CD4-positive, alpha-beta memory T cell (primary cell): ENCODE measurements at regions of chr6 and their contacts with region 1.

Region 1: DNA sequence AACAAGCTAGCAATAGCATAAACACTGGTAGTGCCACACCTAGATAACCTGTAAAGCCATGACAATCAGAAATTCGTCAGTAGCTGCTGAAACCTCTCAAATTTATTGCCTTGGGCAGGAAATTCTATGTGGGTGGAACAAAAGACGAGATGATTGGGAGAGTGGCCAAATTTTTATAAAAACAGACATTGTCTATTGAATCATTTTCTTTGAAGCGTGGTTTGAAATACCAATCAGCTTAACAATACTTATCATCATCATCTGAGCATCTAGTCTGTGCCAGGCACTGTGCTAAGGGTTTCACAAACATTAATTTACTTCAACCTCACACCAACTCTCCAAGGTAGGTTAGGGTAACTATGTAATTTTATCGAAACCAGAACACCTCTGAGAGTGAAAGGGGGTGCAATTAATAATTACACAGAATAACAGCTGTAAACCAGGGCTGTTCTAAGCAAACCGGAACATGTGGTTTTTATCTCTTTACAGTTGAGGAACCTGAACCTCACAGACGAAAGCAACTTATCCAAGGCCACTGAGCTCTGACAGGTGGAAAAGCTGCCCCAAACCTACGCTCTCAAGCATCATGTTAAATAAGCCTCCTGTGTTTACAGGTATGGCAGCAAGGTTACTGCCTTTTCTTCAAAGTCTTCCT is 43.4 kb downstream of the NHSL1 start:
- DNase-seq: peak; percentile 57 to 81 (median 74)
- H3K4me3 ChIP-seq: peak overlapping the region; percentile 12 to 47
- H3K4me3 Mint-ChIP-seq: peak overlapping the region; percentile 57 to 87 (median 72)
- H3K27ac ChIP-seq: peak overlapping the region; percentile 41
- H3K27ac Mint-ChIP-seq: peak overlapping the region; percentile 85 to 96 (median 89)
- H3K4me1 ChIP-seq: peaks cover 26% of the 10 kb centered on the region
- H3K4me1 Mint-ChIP-seq: peaks cover 13 to 37% (median 24%) of the 10 kb centered on the region in 4 donors
- H3K27me3 ChIP-seq: no peaks in the 10 kb centered on the region
- H3K27me3 Mint-ChIP-seq: no peaks in the 10 kb centered on the region

Region 2: GRCh38 chr6:138499303-138500018 is 43.6 kb after region 1 on chr6 and contains the start of gene NHSL1:
- CTCF ChIA-PET with region 1: no interaction called
- POLR2A ChIA-PET with region 1: no interaction called
- intact Hi-C with region 1: loop called (anchors 5 kb)
- DNase-seq: no peak
- H3K4me3 ChIP-seq: no peak within 1 kb of the TSS
- H3K4me3 Mint-ChIP-seq: no peak within 1 kb of the TSS
- H3K27ac ChIP-seq: no peak within 1 kb of the TSS
- H3K27ac Mint-ChIP-seq: no peak within 1 kb of the TSS
- H3K4me1 ChIP-seq: no peaks in the 10 kb centered on the region
- H3K4me1 Mint-ChIP-seq: peaks cover 0 to 3% (median under 1%) of the 10 kb centered on the region in 4 donors
- H3K27me3 ChIP-seq: no peaks in the 10 kb centered on the region
- H3K27me3 Mint-ChIP-seq: peaks cover 3 to 5% of the 10 kb centered on the region in 2 donors
- total RNA-seq, gene NHSL1: 0.53 to 0.58 TPM

Region 3: GRCh38 chr6:138647006-138647405 is 191.1 kb after region 1 on chr6:
- CTCF ChIA-PET with region 1: no interaction called
- POLR2A ChIA-PET with region 1: no interaction called
- intact Hi-C with region 1: no loop called
- DNase-seq: no peak
- H3K4me3 ChIP-seq: no peak overlapping the region
- H3K4me3 Mint-ChIP-seq: no peak overlapping the region
- H3K27ac ChIP-seq: no peak overlapping the region
- H3K27ac Mint-ChIP-seq: no peak overlapping the region
- H3K4me1 ChIP-seq: no peaks in the 10 kb centered on the region
- H3K4me1 Mint-ChIP-seq: no peaks in the 10 kb centered on the region
- H3K27me3 ChIP-seq: no peaks in the 10 kb centered on the region
- H3K27me3 Mint-ChIP-seq: peaks cover 0 to 1% of the 10 kb centered on the region in 2 donors

Region 4: DNA sequence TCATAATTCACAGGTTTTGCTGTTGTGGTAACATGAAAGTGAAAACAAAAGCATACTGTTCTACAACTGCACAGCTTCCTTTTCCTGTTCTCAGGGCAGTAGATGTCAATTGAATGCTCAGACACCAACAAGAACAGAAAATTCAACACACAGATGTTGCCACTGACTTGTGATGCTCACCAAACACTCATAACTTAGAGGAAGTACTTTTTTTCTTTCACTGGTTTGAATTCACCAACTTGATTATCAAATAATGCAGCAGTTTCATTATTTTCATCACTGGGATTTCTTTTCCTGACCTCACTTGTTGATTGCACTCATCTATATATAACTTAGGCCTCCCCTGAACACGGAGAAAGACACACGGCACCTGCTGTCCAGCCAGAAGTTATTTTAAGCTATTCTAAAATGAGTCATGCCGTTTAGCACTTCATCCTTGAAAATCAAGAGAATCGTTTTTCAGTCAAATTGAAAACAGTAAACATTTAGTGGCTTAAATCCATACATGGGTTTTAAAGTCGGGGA is 835.0 kb after region 1 on chr6:
- CTCF ChIA-PET with region 1: no interaction called
- POLR2A ChIA-PET with region 1: no interaction called
- intact Hi-C with region 1: no loop called
- DNase-seq: peak; percentile 67 to 86 (median 78)
- H3K4me3 ChIP-seq: peak overlapping the region in 1 of 2 donors; percentile 42
- H3K4me3 Mint-ChIP-seq: peak overlapping the region; percentile 79 to 91 (median 85)
- H3K27ac ChIP-seq: peak overlapping the region; percentile 59
- H3K27ac Mint-ChIP-seq: peak overlapping the region; percentile 94 to 99 (median 97)
- H3K4me1 ChIP-seq: peaks cover 59% of the 10 kb centered on the region
- H3K4me1 Mint-ChIP-seq: peaks cover 40 to 70% (median 54%) of the 10 kb centered on the region in 4 donors
- H3K27me3 ChIP-seq: no peaks in the 10 kb centered on the region
- H3K27me3 Mint-ChIP-seq: no peaks in the 10 kb centered on the region